Dendritic cell treated with granulocyte-macrophage colony-stimulating factor and Interleukin-4, amounts not matched to agents 40 ng/mL and 50 ng/mL, for 4 days (primary cell): ENCODE measurements at regions of chr6 and their contacts with region 1.

Region 1: DNA sequence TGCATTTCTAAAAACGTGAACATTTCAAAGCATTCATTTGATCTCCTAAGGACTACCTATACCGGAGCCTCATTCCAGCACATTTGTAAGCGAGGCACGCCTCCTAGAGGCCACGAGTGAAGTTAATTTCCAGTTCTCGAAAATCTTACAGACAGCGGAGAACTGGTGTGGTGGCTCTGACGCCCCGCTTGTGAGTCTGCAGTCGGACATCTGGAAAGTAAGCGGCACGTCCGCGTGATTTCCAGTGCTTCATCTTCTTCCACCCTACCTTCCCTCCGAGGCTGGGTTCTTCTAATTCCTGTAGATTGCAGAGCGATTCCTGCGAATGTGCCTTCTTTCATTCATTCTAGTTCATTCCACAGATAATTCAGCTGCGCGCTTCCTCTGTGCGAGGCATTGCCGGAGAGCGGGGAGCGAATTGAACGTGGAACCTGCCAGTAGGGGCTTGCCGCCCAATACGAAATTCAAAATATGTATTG is 810 bp upstream of the PRIM2 start:
- H3K4me3 Mint-ChIP-seq: peak overlapping the region; percentile 94
- H3K27ac Mint-ChIP-seq: peak overlapping the region; percentile 93
- H3K4me1 Mint-ChIP-seq: peaks cover 33% of the 10 kb centered on the region
- H3K27me3 Mint-ChIP-seq: peaks cover 6% of the 10 kb centered on the region

Region 2: GRCh38 chr6:56902641-56903464 is 413.8 kb before region 1 on chr6:
- intact Hi-C with region 1: loop called (anchors 1 kb)
- H3K4me3 Mint-ChIP-seq: no peak overlapping the region
- H3K27ac Mint-ChIP-seq: no peak overlapping the region
- H3K4me1 Mint-ChIP-seq: no peaks in the 10 kb centered on the region
- H3K27me3 Mint-ChIP-seq: no peaks in the 10 kb centered on the region

Region 3: DNA sequence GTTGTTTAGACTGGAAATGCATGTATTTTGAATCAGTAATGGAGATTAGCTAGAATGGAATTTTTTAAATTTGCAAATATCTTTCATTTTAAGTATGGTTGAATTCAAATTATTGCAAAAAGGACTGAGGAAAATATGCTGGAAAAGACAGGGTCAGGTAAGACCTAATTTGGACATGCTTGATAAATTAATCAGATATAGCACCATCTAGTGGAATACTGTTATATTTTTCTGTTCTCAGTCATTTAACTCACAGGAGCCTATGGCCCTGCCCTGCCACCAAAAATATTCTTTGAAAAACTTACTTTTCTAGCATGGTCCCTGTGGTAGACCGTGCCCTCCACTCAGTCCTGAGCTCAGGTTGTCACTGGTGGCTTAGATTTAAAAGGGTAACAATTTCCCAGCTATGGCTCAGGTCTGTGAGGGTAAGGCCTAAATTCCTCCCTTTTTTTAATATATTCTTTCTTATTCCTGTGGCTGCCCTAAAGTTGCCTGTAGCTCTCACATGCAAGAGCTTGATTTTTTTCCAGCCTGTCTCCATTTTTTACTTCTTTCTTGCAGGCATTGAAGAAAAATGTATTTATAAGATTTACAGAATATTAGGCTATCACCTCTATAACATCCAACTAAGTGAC is 295.4 kb before region 1 on chr6:
- intact Hi-C with region 1: loop called (anchors 10 kb)
- H3K4me3 Mint-ChIP-seq: no peak overlapping the region
- H3K27ac Mint-ChIP-seq: no peak overlapping the region
- H3K4me1 Mint-ChIP-seq: no peaks in the 10 kb centered on the region
- H3K27me3 Mint-ChIP-seq: no peaks in the 10 kb centered on the region

Region 4: DNA sequence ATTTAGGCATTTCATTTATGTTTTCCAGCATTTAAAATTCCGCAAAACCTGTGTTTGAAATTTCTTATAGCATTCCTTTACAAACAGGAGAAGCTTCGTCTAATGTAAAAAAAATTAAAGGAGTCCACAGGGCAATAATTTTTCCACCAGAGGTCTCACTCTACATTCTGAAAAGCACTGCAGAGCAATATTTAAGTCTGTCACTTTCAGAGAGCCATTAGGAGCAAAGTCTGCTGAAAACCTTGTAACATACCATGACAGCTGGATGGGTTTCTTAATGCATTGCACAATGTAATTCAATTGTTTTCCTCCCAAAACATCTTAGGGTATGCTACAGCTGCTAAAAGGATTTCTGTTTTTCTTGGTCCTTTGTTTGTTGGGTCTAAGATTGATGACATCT is 126.5 kb before region 1 on chr6:
- intact Hi-C with region 1: loop called (anchors 1 kb)
- H3K4me3 Mint-ChIP-seq: no peak overlapping the region
- H3K27ac Mint-ChIP-seq: no peak overlapping the region
- H3K4me1 Mint-ChIP-seq: no peaks in the 10 kb centered on the region
- H3K27me3 Mint-ChIP-seq: no peaks in the 10 kb centered on the region

Region 5: GRCh38 chr6:57267586-57268293 is 48.9 kb before region 1 on chr6:
- intact Hi-C with region 1: loop called (anchors 1 kb)
- H3K4me3 Mint-ChIP-seq: no peak overlapping the region
- H3K27ac Mint-ChIP-seq: no peak overlapping the region
- H3K4me1 Mint-ChIP-seq: no peaks in the 10 kb centered on the region
- H3K27me3 Mint-ChIP-seq: no peaks in the 10 kb centered on the region